ENCODE measurements at regions of chr7 and their contacts with region 1.

Region 1: DNA sequence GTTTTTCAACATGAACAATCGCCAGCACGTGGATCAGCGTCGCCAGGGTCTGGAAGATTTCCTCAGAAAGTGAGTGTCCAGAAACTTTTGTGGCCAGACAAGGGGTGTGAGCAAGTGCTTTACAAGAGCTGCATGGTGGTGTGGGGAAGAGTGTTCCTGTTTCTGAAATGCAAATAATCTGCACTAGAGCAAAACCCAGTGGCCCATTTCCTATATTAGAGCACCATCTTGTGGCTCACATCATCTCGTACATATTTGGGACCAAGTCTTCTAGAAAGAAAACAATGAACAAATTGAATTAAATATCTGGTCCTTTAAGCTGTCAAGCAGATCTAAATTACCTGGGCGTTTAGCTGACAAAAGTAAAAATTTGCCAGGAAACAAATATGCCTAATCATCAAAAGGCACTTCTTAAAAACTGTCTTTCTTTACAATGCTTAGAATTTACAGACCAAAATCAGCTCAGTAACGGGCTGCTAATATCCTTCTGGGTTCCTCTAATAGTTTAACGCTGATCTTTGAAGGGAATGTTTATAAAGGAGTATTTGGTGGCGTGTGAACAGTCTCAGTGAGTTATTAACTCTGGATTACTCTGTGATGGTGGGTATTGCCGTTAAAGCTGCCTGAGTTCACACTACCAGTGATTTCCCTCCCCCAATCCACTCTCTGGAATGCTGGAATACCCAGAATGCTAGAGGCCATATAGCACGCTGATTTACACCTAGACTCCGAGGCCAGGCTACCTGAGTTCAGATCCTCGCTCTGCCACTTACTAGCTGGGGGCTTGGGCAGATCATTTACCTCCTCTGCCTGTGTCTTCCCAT is 73.6 kb downstream of the SNX10 start:
- DNase-seq: peak; percentile 71
- ATAC-seq: peak; percentile 77
- H3K4me3 Mint-ChIP-seq: no peak overlapping the region
- H3K27ac Mint-ChIP-seq: peak overlapping the region; percentile 48
- H3K4me1 Mint-ChIP-seq: peaks cover 16% of the 10 kb centered on the region
- H3K27me3 Mint-ChIP-seq: no peaks in the 10 kb centered on the region

Region 2: GRCh38 chr7:26187380-26188205 is 177.7 kb before region 1 on chr7:
- CTCF ChIA-PET with region 1: interaction called, 23 read pairs
- POLR2A ChIA-PET with region 1: interaction called, 3 read pairs
- DNase-seq: no peak
- ATAC-seq: peak; percentile 13
- H3K4me3 Mint-ChIP-seq: peak overlapping the region; percentile 6
- H3K27ac Mint-ChIP-seq: peak overlapping the region; percentile 67
- H3K4me1 Mint-ChIP-seq: peaks cover 71% of the 10 kb centered on the region
- H3K27me3 Mint-ChIP-seq: no peaks in the 10 kb centered on the region

Region 3: GRCh38 chr7:26278770-26279169 is 86.5 kb before region 1 on chr7:
- CTCF ChIA-PET with region 1: interaction called, 13 read pairs
- POLR2A ChIA-PET with region 1: no interaction called
- DNase-seq: no peak
- ATAC-seq: peak; percentile 56
- H3K4me3 Mint-ChIP-seq: no peak overlapping the region
- H3K27ac Mint-ChIP-seq: peak overlapping the region; percentile 15
- H3K4me1 Mint-ChIP-seq: peaks cover 17% of the 10 kb centered on the region
- H3K27me3 Mint-ChIP-seq: peaks cover 2% of the 10 kb centered on the region

Region 4: DNA sequence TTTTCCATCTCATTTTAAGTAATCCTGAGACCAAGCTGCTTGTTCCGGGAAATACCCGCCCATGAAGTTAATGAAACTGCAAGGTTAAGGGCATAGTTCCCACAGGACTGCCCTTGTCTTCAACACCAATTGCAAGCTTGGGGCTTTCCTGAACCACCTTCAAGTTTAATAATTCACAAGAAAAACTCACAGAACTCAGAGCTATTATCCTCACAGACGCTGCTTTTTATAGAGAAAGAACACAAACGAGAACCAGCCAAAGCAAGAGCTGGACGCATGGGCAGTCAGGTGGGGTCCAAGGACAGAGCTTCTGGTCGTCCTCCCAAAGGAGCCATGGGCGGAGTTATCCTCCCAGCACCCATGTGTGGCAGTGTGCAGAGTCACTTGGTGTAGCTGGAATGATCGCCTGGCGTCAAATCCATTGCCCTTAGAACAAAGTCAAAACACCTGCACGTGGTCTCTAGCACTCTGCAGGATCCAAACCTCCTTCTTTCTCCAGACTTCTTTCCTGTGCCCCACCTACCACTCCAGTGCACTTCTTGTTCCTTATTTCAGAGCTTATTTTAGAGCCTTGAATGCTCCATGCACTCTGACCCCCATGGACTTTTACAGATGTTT is 16.9 kb before region 1 on chr7:
- CTCF ChIA-PET with region 1: interaction called, 18 read pairs
- POLR2A ChIA-PET with region 1: no interaction called
- DNase-seq: no peak
- ATAC-seq: no peak
- H3K4me3 Mint-ChIP-seq: no peak overlapping the region
- H3K27ac Mint-ChIP-seq: no peak overlapping the region
- H3K4me1 Mint-ChIP-seq: no peaks in the 10 kb centered on the region
- H3K27me3 Mint-ChIP-seq: no peaks in the 10 kb centered on the region

Region 5: GRCh38 chr7:26398756-26399501 is 33.6 kb after region 1 on chr7:
- CTCF ChIA-PET with region 1: interaction called, 15 read pairs
- POLR2A ChIA-PET with region 1: no interaction called
- DNase-seq: peak; percentile 25
- ATAC-seq: peak; percentile 58
- H3K4me3 Mint-ChIP-seq: peak overlapping the region; percentile 82
- H3K27ac Mint-ChIP-seq: no peak overlapping the region
- H3K4me1 Mint-ChIP-seq: peaks cover 12% of the 10 kb centered on the region
- H3K27me3 Mint-ChIP-seq: peaks cover 43% of the 10 kb centered on the region

Region 6: DNA sequence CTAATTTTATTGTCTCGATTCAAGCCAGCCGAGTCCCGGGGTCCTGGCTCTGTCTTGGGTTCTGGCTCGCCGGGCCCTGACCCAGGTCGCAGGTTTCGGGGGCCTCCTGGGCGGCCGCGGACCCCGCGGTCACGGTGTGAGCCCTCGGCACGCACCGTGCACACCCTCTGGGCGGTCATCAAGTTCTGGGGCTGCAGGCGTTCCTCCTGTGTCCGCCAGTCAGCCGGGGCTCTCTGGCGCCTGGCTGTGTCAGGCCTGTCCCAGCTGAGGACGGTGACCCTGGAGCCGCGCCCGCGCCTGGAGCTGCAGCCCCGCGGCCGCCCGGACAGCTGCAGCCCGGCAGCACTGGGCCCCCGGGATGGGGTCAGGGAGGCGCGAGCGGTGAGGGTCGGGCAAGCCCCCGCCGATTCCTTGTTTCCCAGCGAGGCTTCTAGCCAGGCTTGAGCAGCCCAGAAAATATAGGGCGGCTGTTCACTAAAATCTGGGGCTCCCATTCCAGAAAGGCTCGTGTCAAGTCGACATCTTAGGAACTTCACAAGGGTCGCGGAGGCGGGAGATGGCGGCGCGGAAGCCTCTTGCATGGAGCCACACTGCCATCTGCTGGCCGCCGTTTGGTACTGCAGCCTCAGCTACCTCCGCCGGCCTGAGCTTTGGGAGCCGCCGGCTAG is 795.4 kb after region 1 on chr7:
- CTCF ChIA-PET with region 1: interaction called, 38 read pairs
- POLR2A ChIA-PET with region 1: no interaction called
- DNase-seq: peak; percentile 85
- ATAC-seq: peak; percentile 74
- H3K4me3 Mint-ChIP-seq: peak overlapping the region; percentile 65
- H3K27ac Mint-ChIP-seq: no peak overlapping the region
- H3K4me1 Mint-ChIP-seq: peaks cover 17% of the 10 kb centered on the region
- H3K27me3 Mint-ChIP-seq: peaks cover 77% of the 10 kb centered on the region